ENCODE measurements at regions of chr15 and their contacts with region 1.

Region 1: DNA sequence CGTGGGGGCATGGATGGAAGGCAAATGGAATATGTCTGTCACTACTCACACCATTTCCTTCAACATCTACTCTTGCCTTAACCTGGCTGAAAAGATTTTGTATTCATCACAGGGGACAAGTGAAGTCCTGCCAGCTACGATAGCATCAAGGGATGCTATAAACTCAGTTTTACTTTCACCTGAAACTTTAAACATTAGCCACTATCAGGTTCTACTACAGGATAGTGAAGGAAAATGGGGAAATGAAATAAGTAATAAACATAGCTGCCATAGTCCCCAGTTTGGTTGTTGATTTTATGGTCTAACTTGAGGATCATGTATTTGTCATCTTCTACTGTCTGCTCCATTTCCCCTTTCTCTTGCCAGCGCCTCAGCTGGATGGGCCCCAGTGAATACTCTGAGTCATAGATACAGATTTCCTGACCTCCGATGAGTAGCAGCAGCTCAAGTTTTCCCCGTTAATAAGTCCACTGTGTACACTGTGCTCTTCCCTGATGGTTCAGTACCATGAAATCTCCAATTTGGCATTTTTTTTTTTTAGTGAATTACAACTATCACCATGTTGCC is 338.2 kb upstream of the SLCO3A1 start:
- DNase-seq: no peak
- H3K4me3 ChIP-seq: no peak overlapping the region
- H3K27ac ChIP-seq: no peak overlapping the region
- H3K4me1 ChIP-seq: no peaks in the 10 kb centered on the region
- H3K27me3 ChIP-seq: no peaks in the 10 kb centered on the region
- CTCF ChIP-seq: no peak
- EP300 ChIP-seq: no peak
- POLR2A ChIP-seq: no peak

Region 2: GRCh38 chr15:91302588-91303439 is 212.5 kb before region 1 on chr15:
- intact Hi-C with region 1: loop called (anchors 10 kb)
- DNase-seq: peak in 1 of 2 donors; percentile 87
- H3K4me3 ChIP-seq: no peak overlapping the region
- H3K27ac ChIP-seq: no peak overlapping the region
- H3K4me1 ChIP-seq: peaks cover 0 to 13% (median 11%) of the 10 kb centered on the region in 4 donors
- H3K27me3 ChIP-seq: peaks cover 0 to 25% (median 0%) of the 10 kb centered on the region in 3 donors
- CTCF ChIP-seq: peak in 5 of 7 experiments; percentile 52 to 80 (median 68)
- EP300 ChIP-seq: no peak
- POLR2A ChIP-seq: no peak

Measured in stomach (tissue), 19 donors.